ENCODE measurements at regions of chr20 and their contacts with region 1.

Region 1: DNA sequence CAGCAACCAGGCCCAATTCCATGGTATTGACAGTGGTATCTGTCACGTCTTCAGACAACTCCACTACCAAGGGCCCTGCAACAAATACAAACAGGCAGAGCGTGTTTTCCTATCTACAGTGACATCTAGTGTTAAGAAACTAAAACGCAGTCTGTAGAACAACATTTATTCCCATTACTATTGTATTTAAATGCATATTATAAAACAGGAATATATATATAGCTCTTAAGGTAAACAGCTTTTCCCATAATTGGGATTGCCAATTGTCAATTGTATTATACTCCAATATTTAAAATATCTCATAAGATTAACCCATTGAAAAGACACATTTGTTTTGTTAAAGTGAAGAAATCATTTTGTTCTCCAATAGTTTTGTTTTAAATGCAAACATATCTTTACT is 97.2 kb downstream of the KIF16B start:
- DNase-seq: no peak
- ATAC-seq: peak; percentile 73
- H3K4me3 Mint-ChIP-seq: no peak overlapping the region
- H3K27ac Mint-ChIP-seq: no peak overlapping the region
- H3K4me1 Mint-ChIP-seq: peaks cover 8% of the 10 kb centered on the region
- H3K27me3 Mint-ChIP-seq: no peaks in the 10 kb centered on the region
- CTCF ChIP-seq: no peak

Region 2: GRCh38 chr20:15491575-15491974 is 984.5 kb before region 1 on chr20:
- CTCF ChIA-PET with region 1: interaction called, 7 read pairs
- POLR2A ChIA-PET with region 1: no interaction called
- intact Hi-C with region 1: loop called (anchors 2 kb)
- DNase-seq: no peak
- ATAC-seq: no peak
- H3K4me3 Mint-ChIP-seq: no peak overlapping the region
- H3K27ac Mint-ChIP-seq: no peak overlapping the region
- H3K4me1 Mint-ChIP-seq: no peaks in the 10 kb centered on the region
- H3K27me3 Mint-ChIP-seq: no peaks in the 10 kb centered on the region
- CTCF ChIP-seq: no peak

Region 3: DNA sequence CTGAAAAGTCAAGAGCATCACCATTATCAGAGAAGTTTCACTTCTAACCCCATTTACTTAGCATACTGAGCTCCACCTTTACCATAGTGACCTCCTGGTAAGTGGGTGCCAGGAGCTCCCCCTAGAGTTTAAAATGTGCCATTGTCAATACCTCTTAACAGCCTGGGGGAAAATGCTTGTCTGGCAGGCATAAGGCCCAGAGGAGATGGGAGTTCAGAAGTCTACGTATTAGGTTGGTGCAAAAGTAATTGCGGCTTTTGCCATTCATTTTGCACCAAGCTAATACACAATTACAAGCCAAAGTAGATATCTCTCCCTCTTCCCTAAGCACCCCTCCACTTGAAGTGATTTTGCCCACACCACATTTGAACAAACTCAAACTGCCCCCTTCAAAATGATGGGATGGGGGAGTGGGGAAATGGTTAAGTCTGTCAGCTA is 821.8 kb before region 1 on chr20:
- CTCF ChIA-PET with region 1: interaction called, 3 read pairs
- POLR2A ChIA-PET with region 1: no interaction called
- intact Hi-C with region 1: loop called (anchors 5 kb)
- DNase-seq: no peak
- ATAC-seq: peak; percentile 100
- H3K4me3 Mint-ChIP-seq: no peak overlapping the region
- H3K27ac Mint-ChIP-seq: no peak overlapping the region
- H3K4me1 Mint-ChIP-seq: peaks cover 6% of the 10 kb centered on the region
- H3K27me3 Mint-ChIP-seq: no peaks in the 10 kb centered on the region
- CTCF ChIP-seq: no peak

Region 4: DNA sequence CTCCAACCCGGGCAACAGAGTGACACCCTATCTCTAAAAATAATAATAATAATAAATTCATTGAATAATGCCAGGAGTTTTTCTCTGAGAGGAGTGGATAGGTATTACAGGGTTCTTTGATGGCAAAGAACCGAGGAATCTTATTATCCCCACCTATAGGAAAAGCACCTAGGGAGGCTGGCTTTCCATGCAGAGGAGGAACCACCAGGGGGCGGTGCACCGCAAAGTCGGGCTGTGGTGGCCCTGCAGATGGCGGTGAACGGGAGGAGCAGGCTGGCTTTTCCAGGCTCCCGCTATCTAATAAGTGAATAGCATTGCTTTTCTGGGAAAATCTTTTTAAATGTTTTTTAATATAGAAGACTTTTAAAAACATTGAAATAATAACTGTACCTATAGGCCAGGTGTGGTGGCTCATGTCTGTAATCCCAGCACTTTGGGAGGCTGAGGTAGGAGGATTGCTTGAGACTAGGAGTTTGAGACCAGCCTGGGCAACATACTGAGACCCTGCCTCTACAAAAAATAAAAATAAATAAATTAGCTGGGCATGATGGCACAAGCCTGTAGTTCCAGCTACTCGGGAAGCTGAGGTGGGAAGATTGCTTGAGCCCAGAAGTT is 766.9 kb before region 1 on chr20:
- CTCF ChIA-PET with region 1: interaction called, 47 read pairs
- POLR2A ChIA-PET with region 1: no interaction called
- intact Hi-C with region 1: loop called (anchors 1 kb)
- DNase-seq: peak; percentile 55
- ATAC-seq: peak; percentile 78
- H3K4me3 Mint-ChIP-seq: no peak overlapping the region
- H3K27ac Mint-ChIP-seq: no peak overlapping the region
- H3K4me1 Mint-ChIP-seq: peaks cover 4% of the 10 kb centered on the region
- H3K27me3 Mint-ChIP-seq: no peaks in the 10 kb centered on the region
- CTCF ChIP-seq: no peak

Region 5: DNA sequence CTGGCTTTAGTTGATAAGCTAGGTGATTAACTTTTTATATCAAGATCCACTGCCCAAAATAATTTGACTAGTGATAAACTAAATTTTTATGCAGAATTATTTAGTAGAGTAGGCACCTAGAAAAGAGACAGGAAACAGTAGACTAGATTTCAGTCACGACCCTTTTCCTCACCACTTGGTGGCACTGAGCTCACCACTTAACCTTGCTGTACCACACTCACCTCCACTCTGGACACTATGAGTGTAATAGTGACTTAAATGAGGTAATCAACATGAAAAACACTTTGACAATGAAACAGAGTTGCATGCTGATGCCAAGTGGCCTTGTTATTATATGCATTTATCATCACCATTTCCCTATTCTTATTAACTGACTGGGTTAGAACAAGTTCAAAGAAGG is 633.2 kb before region 1 on chr20:
- CTCF ChIA-PET with region 1: interaction called, 11 read pairs
- POLR2A ChIA-PET with region 1: no interaction called
- intact Hi-C with region 1: loop called (anchors 1 kb)
- DNase-seq: no peak
- ATAC-seq: peak; percentile 90
- H3K4me3 Mint-ChIP-seq: no peak overlapping the region
- H3K27ac Mint-ChIP-seq: peak overlapping the region; percentile 21
- H3K4me1 Mint-ChIP-seq: peaks cover 13% of the 10 kb centered on the region
- H3K27me3 Mint-ChIP-seq: no peaks in the 10 kb centered on the region
- CTCF ChIP-seq: no peak

Region 6: GRCh38 chr20:15930311-15931305 is 545.4 kb before region 1 on chr20:
- CTCF ChIA-PET with region 1: interaction called, 5 read pairs
- POLR2A ChIA-PET with region 1: no interaction called
- intact Hi-C with region 1: loop called (anchors 10 kb)
- DNase-seq: no peak
- ATAC-seq: peak; percentile 54
- H3K4me3 Mint-ChIP-seq: no peak overlapping the region
- H3K27ac Mint-ChIP-seq: peak overlapping the region; percentile 67
- H3K4me1 Mint-ChIP-seq: peaks cover 36% of the 10 kb centered on the region
- H3K27me3 Mint-ChIP-seq: no peaks in the 10 kb centered on the region
- CTCF ChIP-seq: no peak

Region 7: GRCh38 chr20:16352321-16352720 is 123.7 kb before region 1 on chr20:
- CTCF ChIA-PET with region 1: interaction called, 3 read pairs
- POLR2A ChIA-PET with region 1: no interaction called
- intact Hi-C with region 1: loop called (anchors 1 kb)
- DNase-seq: no peak
- ATAC-seq: no peak
- H3K4me3 Mint-ChIP-seq: no peak overlapping the region
- H3K27ac Mint-ChIP-seq: no peak overlapping the region
- H3K4me1 Mint-ChIP-seq: no peaks in the 10 kb centered on the region
- H3K27me3 Mint-ChIP-seq: no peaks in the 10 kb centered on the region
- CTCF ChIP-seq: no peak

Measured in activated B cell treated with CpG ODN at 0.5 μM for 24 hours (primary cell).